GM10248 (cell line): ENCODE measurements at regions of chr5 and their contacts with region 1.

Region 1: GRCh38 chr5:7815892-7816534 is 34.9 kb downstream of the CFAP90 start:
- DNase-seq: peak; percentile 79
- CTCF ChIP-seq: peak; percentile 92

Region 2: DNA sequence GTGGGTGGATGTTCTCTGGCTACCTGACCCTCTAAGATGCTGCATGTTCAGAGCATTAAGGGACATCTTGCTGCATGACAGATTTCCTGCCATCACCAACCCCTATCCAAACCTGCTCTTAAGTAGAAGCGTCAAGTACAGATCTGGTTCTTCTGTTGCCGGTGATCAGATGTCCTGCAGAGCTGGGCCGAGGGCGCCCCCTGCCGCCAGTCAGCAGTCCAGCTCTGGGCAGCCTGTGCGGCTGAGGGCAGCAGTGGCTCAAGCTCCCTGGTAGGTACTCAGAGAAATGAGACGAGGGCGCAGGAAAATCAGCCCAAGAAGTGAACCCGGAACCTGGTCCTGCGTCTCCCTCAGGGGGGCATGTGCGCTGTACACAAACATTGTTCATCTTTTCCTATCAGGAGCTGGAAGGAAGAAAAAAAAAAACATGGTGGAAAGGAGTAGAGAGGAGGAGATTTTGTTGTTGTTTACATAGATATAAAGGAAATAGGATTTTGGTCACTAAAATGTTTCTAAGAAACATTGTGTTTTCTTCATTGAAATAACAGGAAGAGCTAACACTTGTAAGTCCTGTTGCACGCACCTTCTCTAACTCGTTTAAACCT is 60.9 kb before region 1 on chr5:
- CTCF ChIA-PET with region 1: interaction called, 34 read pairs
- POLR2A ChIA-PET with region 1: no interaction called
- DNase-seq: peak; percentile 65
- CTCF ChIP-seq: peak; percentile 86

Region 3: DNA sequence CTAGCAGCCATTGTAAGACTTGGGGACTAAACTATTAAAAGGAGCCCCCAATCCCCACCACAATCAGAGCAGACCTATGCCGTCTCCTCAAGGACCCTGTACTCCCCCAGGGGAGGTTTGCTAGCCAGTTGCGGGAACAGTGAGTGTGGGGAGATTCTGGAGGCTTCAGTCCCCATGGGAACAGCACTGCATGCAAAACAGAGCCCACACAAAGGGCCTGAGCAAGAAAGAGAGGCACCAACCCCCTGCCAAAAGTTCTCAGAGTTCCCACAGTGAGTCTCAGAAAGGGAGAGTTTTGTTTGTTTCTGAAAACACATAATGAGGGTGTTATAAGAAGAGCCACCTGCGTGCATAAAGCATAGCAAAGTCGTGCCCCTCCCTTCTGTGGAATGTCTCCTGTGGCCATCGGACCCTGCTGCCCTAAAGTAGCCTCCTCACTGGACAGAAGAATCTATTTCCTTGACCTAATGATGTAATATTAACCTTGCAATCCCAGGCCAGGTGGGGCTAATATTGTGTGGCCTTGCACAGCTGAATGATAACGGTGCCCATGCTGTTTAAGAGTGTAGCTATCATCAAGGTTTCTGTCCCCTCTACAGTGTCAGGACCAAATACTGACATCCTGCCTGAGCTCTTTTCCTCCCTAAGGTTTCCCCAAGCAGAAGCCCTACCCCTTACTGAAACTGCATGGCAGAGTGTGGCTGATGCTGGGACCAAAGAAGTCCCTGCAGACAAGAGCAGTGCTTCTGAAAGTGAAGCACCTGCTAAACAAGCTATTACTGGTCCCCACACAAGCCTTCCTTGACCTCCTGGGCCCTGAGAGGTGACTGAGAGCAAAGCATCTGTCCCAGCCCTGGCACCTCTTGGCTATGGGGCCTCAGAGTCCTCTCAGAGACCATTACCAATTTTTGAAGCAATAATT is 21.5 kb before region 1 on chr5:
- CTCF ChIA-PET with region 1: interaction called, 10 read pairs
- POLR2A ChIA-PET with region 1: no interaction called
- DNase-seq: peak; percentile 66
- CTCF ChIP-seq: no peak

Region 4: GRCh38 chr5:7805379-7805778 is 10.6 kb before region 1 on chr5:
- CTCF ChIA-PET with region 1: interaction called, 34 read pairs
- POLR2A ChIA-PET with region 1: no interaction called
- DNase-seq: no peak
- CTCF ChIP-seq: peak; percentile 55

Region 5: DNA sequence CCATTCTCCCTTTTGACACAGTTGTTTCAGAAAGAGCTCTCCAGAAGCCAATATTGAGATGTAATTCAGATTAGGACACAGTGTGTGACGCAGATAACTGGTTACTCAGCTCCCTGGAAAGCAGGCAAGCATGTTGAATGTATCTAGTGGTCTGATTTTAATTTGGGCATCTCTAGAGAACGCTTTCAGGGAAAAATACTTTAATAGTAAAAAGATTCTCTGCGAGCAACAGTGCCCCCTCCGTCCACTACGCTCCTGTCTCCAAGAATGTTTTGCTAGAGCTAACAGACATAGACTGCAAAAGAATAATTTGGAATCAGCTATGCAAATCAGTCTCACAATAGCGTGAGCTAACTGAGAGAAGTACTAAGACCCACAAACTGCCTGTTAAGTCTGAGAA is 11.6 kb after region 1 on chr5:
- CTCF ChIA-PET with region 1: interaction called, 18 read pairs
- POLR2A ChIA-PET with region 1: no interaction called
- DNase-seq: no peak
- CTCF ChIP-seq: no peak

Region 6: GRCh38 chr5:7834982-7835381 is 19.0 kb after region 1 on chr5:
- CTCF ChIA-PET with region 1: interaction called, 18 read pairs
- POLR2A ChIA-PET with region 1: no interaction called
- DNase-seq: no peak
- CTCF ChIP-seq: no peak